ENCODE measurements at regions of chr7 and their contacts with region 1.

Region 1: DNA sequence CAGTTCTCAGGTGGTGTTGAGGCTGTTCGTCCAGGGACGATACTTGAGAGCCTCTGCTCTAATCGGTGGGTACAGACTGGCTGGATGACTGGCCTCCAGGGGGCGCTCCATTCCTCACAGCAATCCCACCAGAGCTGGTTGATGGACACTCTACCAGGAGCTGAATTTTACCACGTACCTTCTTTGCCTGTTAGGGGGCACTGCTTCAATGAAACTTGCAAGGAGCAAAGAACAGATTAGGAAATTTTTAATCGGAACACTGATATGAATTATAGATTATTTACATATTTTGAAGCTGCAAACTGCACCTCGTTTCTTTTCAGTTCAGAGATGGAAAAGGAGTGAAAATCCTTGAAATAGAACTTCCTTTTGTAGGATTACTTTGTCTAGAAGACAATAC is 44.9 kb downstream of the KBTBD2 start:
- DNase-seq: peak; percentile 94
- ATAC-seq: peak; percentile 99
- H3K4me3 Mint-ChIP-seq: no peak overlapping the region
- H3K27ac Mint-ChIP-seq: peak overlapping the region; percentile 65; the same call in 1 of the 2 replicates
- H3K4me1 Mint-ChIP-seq: peaks cover 36% of the 10 kb centered on the region
- H3K27me3 Mint-ChIP-seq: peaks cover 8% of the 10 kb centered on the region
- CTCF ChIP-seq: peak; percentile 90

Region 2: DNA sequence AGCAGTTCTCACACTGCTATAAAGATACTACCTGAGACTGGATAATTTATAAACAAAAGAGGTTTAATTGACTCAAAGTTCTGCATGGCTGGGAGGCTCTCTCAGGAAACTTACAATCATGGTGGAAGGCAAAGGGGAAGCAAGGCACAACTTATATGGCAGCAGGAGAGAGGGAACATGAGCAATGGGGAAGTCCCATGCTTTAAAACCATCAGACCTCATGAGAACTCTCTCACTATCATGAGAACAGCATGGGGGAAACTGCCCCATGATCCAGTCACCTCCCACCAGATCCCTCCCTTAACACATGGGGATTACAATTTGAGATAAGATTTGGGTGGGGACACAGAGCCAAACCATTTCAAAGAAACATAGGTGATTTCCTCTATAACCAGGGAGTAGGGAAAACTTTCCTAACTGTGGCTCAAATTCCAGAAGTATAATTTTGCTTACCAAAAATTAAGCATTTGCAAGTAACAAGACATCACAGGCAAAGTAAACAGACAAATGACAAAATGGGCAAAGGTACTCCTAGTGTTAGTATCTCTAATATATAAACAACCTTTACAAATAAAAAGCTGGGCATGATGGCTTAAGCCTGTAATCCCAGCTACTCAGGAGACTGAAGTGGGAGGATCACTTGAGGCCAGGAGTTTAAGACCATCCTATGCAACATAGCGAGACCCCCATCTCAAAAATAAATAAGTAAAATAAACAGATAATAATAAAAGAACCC is 43.1 kb before region 1 on chr7:
- CTCF ChIA-PET with region 1: interaction called, 15 read pairs
- POLR2A ChIA-PET with region 1: no interaction called
- DNase-seq: no peak
- ATAC-seq: no peak
- H3K4me3 Mint-ChIP-seq: no peak overlapping the region
- H3K27ac Mint-ChIP-seq: no peak overlapping the region
- H3K4me1 Mint-ChIP-seq: no peaks in the 10 kb centered on the region
- H3K27me3 Mint-ChIP-seq: peaks cover 34% of the 10 kb centered on the region
- CTCF ChIP-seq: no peak

Region 3: DNA sequence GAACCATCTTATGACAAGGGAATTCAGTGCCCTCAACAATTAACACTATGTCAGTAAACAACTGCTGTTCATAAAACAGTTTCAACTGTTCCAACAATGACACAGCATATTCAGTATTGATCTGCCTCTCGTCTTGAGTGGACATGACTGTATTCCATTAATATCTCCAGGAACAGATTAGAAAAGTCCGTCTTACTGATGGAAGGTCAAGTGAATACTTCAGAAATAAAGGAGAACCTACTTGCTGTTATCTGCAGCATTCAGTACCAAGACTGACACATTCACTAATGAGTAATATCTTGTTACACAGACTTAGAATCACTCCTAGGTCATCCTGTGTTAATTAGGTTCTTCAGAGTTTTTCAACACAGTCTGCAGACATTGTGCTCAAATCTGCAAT is 32.8 kb after region 1 on chr7:
- CTCF ChIA-PET with region 1: interaction called, 13 read pairs
- POLR2A ChIA-PET with region 1: no interaction called
- DNase-seq: no peak
- ATAC-seq: no peak
- H3K4me3 Mint-ChIP-seq: no peak overlapping the region
- H3K27ac Mint-ChIP-seq: peak overlapping the region; percentile 58; the same call in 1 of the 2 replicates
- H3K4me1 Mint-ChIP-seq: peaks cover 7% of the 10 kb centered on the region; the same call in 1 of the 2 replicates
- H3K27me3 Mint-ChIP-seq: no peaks in the 10 kb centered on the region
- CTCF ChIP-seq: no peak

Region 4: GRCh38 chr7:32891800-32892520 is 45.3 kb after region 1 on chr7:
- CTCF ChIA-PET with region 1: interaction called, 29 read pairs
- POLR2A ChIA-PET with region 1: no interaction called
- DNase-seq: peak; percentile 97
- ATAC-seq: peak; percentile 88
- H3K4me3 Mint-ChIP-seq: peak overlapping the region; percentile 85
- H3K27ac Mint-ChIP-seq: peak overlapping the region; percentile 99
- H3K4me1 Mint-ChIP-seq: peaks cover 39% of the 10 kb centered on the region
- H3K27me3 Mint-ChIP-seq: peaks cover 14% of the 10 kb centered on the region
- CTCF ChIP-seq: no peak

Region 5: GRCh38 chr7:32942786-32943653 is 96.3 kb after region 1 on chr7:
- CTCF ChIA-PET with region 1: interaction called, 54 read pairs
- POLR2A ChIA-PET with region 1: no interaction called
- DNase-seq: peak; percentile 82
- ATAC-seq: peak; percentile 91
- H3K4me3 Mint-ChIP-seq: peak overlapping the region; percentile 30; the same call in 1 of the 2 replicates
- H3K27ac Mint-ChIP-seq: no peak overlapping the region
- H3K4me1 Mint-ChIP-seq: peaks cover 14% of the 10 kb centered on the region
- H3K27me3 Mint-ChIP-seq: peaks cover 97% of the 10 kb centered on the region
- CTCF ChIP-seq: no peak

Region 6: DNA sequence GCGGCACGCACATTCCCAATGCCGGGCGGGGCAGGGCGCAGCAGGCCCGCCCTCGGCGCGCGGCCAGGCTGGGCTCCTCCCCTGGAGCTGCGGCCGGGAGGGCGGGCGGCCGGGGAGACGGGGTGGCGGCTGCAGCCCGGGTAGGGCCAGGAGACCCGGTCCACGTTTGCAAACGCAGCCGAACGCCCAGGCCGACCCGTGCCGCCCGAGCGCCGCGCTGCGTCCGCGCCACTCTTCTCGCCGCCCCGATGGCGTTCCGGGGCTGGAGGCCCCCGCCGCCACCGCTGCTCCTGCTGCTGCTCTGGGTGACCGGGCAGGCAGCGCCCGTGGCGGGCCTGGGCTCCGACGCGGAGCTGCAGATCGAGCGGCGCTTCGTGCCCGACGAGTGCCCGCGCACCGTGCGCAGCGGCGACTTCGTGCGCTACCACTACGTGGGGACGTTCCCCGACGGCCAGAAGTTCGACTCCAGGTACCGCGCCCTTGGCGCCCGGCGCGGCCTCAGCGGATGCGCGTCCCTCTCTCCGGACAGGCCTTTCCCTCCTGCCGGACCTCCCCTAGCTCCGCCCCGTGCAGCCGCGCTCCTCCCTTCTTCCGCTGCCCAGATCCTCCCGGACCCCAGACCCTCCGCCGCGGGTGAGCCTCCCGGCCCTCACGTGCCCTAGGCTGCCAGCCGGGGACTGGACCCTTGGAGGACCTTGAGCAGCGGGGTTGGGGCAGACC is 110.8 kb after region 1 on chr7 and contains the start of gene FKBP9:
- CTCF ChIA-PET with region 1: interaction called, 15 read pairs
- POLR2A ChIA-PET with region 1: no interaction called
- DNase-seq: peak; percentile 84
- ATAC-seq: peak; percentile 91
- H3K4me3 Mint-ChIP-seq: peak within 1 kb of the TSS; percentile 76
- H3K27ac Mint-ChIP-seq: peak within 1 kb of the TSS; percentile 27; the same call in 1 of the 2 replicates
- H3K4me1 Mint-ChIP-seq: peaks cover 10% of the 10 kb centered on the region
- H3K27me3 Mint-ChIP-seq: peaks cover 71% of the 10 kb centered on the region
- CTCF ChIP-seq: no peak
- total RNA-seq, gene FKBP9: 11.0 to 18.0 TPM (median 12.7 TPM) in 3 replicates

Region 7: GRCh38 chr7:33287748-33288147 is 441.0 kb after region 1 on chr7:
- CTCF ChIA-PET with region 1: no interaction called
- POLR2A ChIA-PET with region 1: no interaction called
- DNase-seq: no peak
- ATAC-seq: no peak
- H3K4me3 Mint-ChIP-seq: no peak overlapping the region
- H3K27ac Mint-ChIP-seq: 0 out of 2 replicates have a peak overlapping the region, but pooled peaks have one; percentile 41
- H3K4me1 Mint-ChIP-seq: peaks cover 12% of the 10 kb centered on the region
- H3K27me3 Mint-ChIP-seq: peaks cover 3% of the 10 kb centered on the region
- CTCF ChIP-seq: no peak